Ascending aorta (tissue), 2 donors: ENCODE measurements at regions of chr6 and their contacts with region 1.

Region 1: GRCh38 chr6:28880894-28881780 is 42.6 kb downstream of the TRIM27 start:
- DNase-seq: peak in 1 of 2 donors; percentile 86
- H3K4me3 ChIP-seq: peak overlapping the region; percentile 48 to 64
- H3K27ac ChIP-seq: no peak overlapping the region
- H3K4me1 ChIP-seq: no peaks in the 10 kb centered on the region
- H3K27me3 ChIP-seq: peaks cover 3% of the 10 kb centered on the region
- CTCF ChIP-seq: no peak

Region 2: DNA sequence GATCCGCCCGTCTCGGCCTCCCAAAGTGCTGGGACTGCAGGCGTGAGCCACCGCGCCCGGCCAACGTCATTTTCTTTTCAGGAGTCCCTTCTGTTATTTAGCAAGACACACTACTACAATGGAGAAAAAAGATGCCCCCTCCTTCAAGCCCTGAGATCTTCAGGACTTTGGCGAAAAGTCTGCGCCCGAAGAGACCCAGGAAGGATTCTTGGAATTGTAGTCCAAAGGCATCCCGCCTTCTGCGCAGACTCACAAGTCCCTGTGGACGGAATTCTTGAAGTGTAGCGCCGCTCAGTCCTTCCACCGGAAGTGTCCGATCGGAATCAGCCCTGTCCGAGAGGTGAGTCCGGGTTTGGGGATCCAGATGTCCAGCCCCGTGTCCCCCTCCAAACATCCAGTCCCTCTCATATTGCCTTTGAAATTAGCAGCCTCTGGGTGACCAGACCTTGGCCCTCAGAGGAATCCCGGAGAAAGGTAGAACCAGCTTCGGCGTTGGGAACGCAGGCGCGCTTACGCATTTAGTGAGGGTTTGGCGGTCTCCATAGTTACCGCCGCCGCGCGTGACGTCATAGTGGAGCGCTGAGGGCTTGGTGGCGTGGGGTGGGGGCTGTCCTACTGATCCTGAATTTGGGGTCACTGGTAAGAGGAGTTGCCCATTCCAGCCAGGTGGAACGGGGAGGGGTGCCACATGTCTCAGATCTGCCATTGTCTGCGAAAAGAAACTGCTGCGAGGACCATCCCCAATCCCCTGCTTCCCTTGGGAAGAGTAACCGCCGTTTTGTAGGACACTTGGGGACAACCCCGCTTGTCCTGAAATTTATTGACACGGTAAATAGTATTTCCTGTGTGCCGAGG is 800.3 kb before region 1 on chr6:
- intact Hi-C with region 1: no loop called
- DNase-seq: peak; percentile 75 to 96
- H3K4me3 ChIP-seq: peak overlapping the region; percentile 56 to 72
- H3K27ac ChIP-seq: peak overlapping the region; percentile 83
- H3K4me1 ChIP-seq: peaks cover 0 to 7% of the 10 kb centered on the region in 2 donors
- H3K27me3 ChIP-seq: no peaks in the 10 kb centered on the region
- CTCF ChIP-seq: no peak

Region 3: DNA sequence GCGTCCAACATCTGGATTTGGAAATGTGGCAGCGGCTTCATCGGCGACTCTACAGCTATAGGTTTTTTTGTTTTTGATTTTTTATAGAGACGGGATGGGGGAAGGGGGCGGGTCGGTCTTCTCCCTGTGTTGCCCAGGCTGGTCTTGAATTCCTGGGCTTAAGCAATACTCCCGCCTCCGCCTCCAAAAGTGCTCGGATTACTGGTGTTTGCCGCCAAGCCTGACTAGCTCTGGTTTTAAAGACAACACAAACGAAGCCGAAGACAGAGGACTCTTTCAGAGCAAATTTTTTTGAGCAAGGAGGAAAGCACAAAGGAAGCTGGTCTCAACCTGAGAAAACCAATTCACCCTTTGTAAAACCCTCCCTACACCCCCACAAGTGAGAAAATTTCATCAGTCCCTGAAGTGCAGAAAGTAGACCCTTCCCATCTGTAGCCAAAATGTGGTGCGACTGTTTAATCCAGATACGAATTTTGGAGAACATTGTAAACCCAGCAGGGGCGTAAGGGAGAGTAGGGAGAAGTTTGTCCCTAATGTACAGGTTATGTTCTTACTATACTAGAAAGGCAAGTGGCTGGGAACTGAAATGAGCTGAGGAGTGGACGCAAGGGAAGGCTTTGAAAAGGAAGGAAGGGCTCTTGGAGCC is 143.3 kb before region 1 on chr6:
- intact Hi-C with region 1: no loop called
- DNase-seq: no peak
- H3K4me3 ChIP-seq: no peak overlapping the region
- H3K27ac ChIP-seq: no peak overlapping the region
- H3K4me1 ChIP-seq: no peaks in the 10 kb centered on the region
- H3K27me3 ChIP-seq: no peaks in the 10 kb centered on the region
- CTCF ChIP-seq: no peak

Region 4: GRCh38 chr6:28863604-28864320 is 17.4 kb before region 1 on chr6:
- intact Hi-C with region 1: loop called (anchors 1 kb)
- DNase-seq: peak in 1 of 2 donors; percentile 86
- H3K4me3 ChIP-seq: peak overlapping the region; percentile 66 to 81
- H3K27ac ChIP-seq: peak overlapping the region; percentile 59 to 78
- H3K4me1 ChIP-seq: peaks cover 0 to 3% of the 10 kb centered on the region in 2 donors
- H3K27me3 ChIP-seq: no peaks in the 10 kb centered on the region
- CTCF ChIP-seq: no peak

Region 5: DNA sequence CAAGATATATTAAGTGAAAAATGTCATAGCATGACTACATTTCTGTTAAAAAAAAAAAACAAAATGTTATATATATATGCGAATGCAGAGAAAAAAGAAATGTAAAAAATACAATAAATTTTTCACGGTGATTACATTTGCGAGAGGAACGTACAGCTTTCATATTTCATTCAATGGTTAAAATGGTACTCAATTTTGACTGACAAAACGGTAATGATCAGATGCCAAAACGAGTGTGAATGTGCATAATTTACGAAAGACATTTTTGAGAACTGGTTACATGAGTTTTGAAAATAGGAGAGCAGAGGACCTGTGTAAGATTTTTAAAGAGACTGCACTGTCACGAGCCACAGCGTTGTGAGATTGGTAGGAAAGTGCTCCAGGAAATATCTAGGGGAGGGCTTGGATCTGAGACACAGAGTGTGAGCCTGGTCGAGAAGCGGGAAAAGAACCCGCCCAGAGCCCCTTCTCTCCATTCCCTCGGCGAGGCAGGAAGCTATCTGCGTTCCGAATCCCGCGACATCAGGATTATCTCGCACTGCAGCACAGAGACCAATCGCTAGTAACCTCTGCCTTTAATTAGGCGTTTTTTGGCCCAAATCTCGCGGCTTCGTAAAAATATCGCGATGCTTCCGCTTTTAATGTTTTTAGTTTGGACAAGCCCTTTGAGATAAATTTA is 14.1 kb after region 1 on chr6:
- intact Hi-C with region 1: loop called (anchors 2 kb)
- DNase-seq: peak; percentile 86 to 98
- H3K4me3 ChIP-seq: peak overlapping the region; percentile 60 to 72
- H3K27ac ChIP-seq: peak overlapping the region; percentile 95 to 96
- H3K4me1 ChIP-seq: no peaks in the 10 kb centered on the region
- H3K27me3 ChIP-seq: no peaks in the 10 kb centered on the region
- CTCF ChIP-seq: no peak